ENCODE measurements at regions of chr11 and their contacts with region 1.

Region 1: DNA sequence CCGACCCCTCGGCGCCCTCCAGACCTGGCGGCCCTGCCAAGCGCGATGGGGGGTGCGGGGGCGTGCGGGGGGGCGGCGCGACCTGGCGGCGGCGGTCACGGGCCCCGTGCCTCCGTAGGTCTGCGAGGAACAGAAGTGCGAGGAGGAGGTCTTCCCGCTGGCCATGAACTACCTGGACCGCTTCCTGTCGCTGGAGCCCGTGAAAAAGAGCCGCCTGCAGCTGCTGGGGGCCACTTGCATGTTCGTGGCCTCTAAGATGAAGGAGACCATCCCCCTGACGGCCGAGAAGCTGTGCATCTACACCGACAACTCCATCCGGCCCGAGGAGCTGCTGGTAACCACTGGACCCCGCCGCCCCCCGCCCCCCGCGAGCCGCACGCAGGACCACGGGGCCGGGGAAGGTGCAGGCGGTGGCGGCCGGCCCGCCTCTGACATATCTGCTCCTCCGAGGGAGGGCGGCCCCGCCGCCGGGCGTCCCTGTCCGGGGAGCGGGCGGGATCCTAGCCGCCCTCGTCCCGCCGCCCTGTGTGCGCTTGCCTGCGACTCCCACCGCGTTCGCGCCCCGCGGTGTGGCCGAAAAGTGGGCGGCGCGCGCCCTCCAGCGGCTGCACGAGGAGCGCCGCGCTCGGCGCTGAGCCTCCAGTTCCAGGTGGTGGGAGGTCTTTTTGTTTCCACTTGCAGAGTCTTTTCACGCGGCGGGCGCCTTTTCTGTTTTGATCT is 2.1 kb downstream of the CCND1 start:
- DNase-seq: peak; percentile 57 to 88 (median 83)
- ATAC-seq: peak; percentile 90
- H3K4me3 ChIP-seq: peak overlapping the region; percentile 61
- H3K4me3 Mint-ChIP-seq: peak overlapping the region; percentile 49 to 95 (median 78)
- H3K27ac ChIP-seq: peak overlapping the region; percentile 48
- H3K27ac Mint-ChIP-seq: peak overlapping the region in 1 of 9 donors; percentile 41
- H3K4me1 ChIP-seq: peaks cover 3 to 21% of the 10 kb centered on the region in 2 donors
- H3K4me1 Mint-ChIP-seq: peaks cover 12 to 30% (median 25%) of the 10 kb centered on the region in 7 donors
- H3K27me3 ChIP-seq: peaks cover 9 to 16% of the 10 kb centered on the region in 2 donors
- H3K27me3 Mint-ChIP-seq: peaks cover 23 to 29% (median 26%) of the 10 kb centered on the region in 5 donors

Region 2: GRCh38 chr11:68584097-68584496 is 1059.0 kb before region 1 on chr11:
- CTCF ChIA-PET with region 1: no interaction called
- POLR2A ChIA-PET with region 1: no interaction called
- intact Hi-C with region 1: loop called in 1 of 2 experiments (anchors 5 kb)
- DNase-seq: peak; percentile 13 to 52 (median 45)
- ATAC-seq: peak; percentile 83
- H3K4me3 ChIP-seq: no peak overlapping the region
- H3K4me3 Mint-ChIP-seq: no peak overlapping the region
- H3K27ac ChIP-seq: no peak overlapping the region
- H3K27ac Mint-ChIP-seq: peak overlapping the region in 3 of 9 donors; percentile 18 to 63 (median 55)
- H3K4me1 ChIP-seq: no peaks in the 10 kb centered on the region
- H3K4me1 Mint-ChIP-seq: peaks cover 0 to 26% (median 4%) of the 10 kb centered on the region in 7 donors
- H3K27me3 ChIP-seq: no peaks in the 10 kb centered on the region
- H3K27me3 Mint-ChIP-seq: no peaks in the 10 kb centered on the region

Region 3: GRCh38 chr11:69101115-69101791 is 541.8 kb before region 1 on chr11:
- CTCF ChIA-PET with region 1: interaction called, 37 read pairs
- POLR2A ChIA-PET with region 1: interaction called, 6 read pairs
- intact Hi-C with region 1: loop called in 1 of 2 experiments (anchors 1 kb)
- DNase-seq: peak; percentile 58 to 88 (median 76)
- ATAC-seq: peak; percentile 96
- H3K4me3 ChIP-seq: no peak overlapping the region
- H3K4me3 Mint-ChIP-seq: no peak overlapping the region
- H3K27ac ChIP-seq: no peak overlapping the region
- H3K27ac Mint-ChIP-seq: peak overlapping the region in 1 of 9 donors; percentile 26
- H3K4me1 ChIP-seq: peaks cover 0 to 7% of the 10 kb centered on the region in 2 donors
- H3K4me1 Mint-ChIP-seq: peaks cover 2 to 18% (median 5%) of the 10 kb centered on the region in 7 donors
- H3K27me3 ChIP-seq: no peaks in the 10 kb centered on the region
- H3K27me3 Mint-ChIP-seq: peaks cover 0 to 3% (median 0%) of the 10 kb centered on the region in 5 donors

Region 4: GRCh38 chr11:69122642-69123431 is 520.2 kb before region 1 on chr11:
- CTCF ChIA-PET with region 1: no interaction called
- POLR2A ChIA-PET with region 1: no interaction called
- intact Hi-C with region 1: loop called in 1 of 2 experiments (anchors 5 kb)
- DNase-seq: peak in 8 of 9 donors; percentile 51 to 78 (median 60)
- ATAC-seq: peak; percentile 85
- H3K4me3 ChIP-seq: peak overlapping the region; percentile 53
- H3K4me3 Mint-ChIP-seq: peak overlapping the region; percentile 69 to 86 (median 81)
- H3K27ac ChIP-seq: peak overlapping the region; percentile 76
- H3K27ac Mint-ChIP-seq: peak overlapping the region; percentile 80 to 94 (median 88)
- H3K4me1 ChIP-seq: peaks cover 4 to 42% of the 10 kb centered on the region in 2 donors
- H3K4me1 Mint-ChIP-seq: peaks cover 24 to 57% (median 40%) of the 10 kb centered on the region in 7 donors
- H3K27me3 ChIP-seq: no peaks in the 10 kb centered on the region
- H3K27me3 Mint-ChIP-seq: no peaks in the 10 kb centered on the region

Region 5: DNA sequence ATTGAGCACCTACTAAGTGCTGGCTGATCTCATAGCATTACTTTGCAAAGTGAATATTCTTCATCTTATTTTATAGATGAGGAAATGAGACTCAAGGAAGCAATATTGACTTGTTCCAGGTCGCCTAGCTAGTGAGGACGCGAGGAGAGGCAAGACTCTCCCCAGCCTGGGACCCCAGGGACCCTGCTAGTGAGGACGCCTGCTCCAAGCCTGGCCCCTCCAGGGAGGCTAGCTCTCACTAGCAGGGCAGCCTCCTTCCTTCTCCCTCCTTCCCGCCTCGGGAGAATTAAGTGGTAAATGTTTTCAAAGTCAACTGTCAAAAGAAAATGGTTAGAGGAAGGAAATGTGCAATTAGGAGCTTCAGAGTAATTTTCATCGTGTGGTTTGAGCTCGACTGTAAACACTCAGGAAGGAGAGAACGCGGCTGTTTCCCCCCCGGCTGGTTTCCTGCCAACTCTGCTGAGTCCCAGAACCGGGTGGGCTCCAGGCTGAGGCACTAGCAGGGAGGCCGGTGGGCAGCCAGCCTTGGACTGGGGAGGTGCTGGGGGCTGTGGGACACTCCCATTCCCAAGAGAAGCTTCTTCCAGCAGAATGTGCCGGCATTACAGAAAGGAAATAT is 331.2 kb before region 1 on chr11:
- CTCF ChIA-PET with region 1: no interaction called
- POLR2A ChIA-PET with region 1: no interaction called
- intact Hi-C with region 1: loop called in 1 of 2 experiments (anchors 5 kb)
- DNase-seq: peak in 7 of 9 donors; percentile 30 to 53 (median 49)
- ATAC-seq: peak; percentile 62
- H3K4me3 ChIP-seq: peak overlapping the region; percentile 43
- H3K4me3 Mint-ChIP-seq: peak overlapping the region; percentile 56 to 81 (median 75)
- H3K27ac ChIP-seq: peak overlapping the region; percentile 55
- H3K27ac Mint-ChIP-seq: peak overlapping the region; percentile 55 to 91 (median 79)
- H3K4me1 ChIP-seq: peaks cover 23 to 27% of the 10 kb centered on the region in 2 donors
- H3K4me1 Mint-ChIP-seq: peaks cover 18 to 48% (median 43%) of the 10 kb centered on the region in 7 donors
- H3K27me3 ChIP-seq: no peaks in the 10 kb centered on the region
- H3K27me3 Mint-ChIP-seq: no peaks in the 10 kb centered on the region

Region 6: DNA sequence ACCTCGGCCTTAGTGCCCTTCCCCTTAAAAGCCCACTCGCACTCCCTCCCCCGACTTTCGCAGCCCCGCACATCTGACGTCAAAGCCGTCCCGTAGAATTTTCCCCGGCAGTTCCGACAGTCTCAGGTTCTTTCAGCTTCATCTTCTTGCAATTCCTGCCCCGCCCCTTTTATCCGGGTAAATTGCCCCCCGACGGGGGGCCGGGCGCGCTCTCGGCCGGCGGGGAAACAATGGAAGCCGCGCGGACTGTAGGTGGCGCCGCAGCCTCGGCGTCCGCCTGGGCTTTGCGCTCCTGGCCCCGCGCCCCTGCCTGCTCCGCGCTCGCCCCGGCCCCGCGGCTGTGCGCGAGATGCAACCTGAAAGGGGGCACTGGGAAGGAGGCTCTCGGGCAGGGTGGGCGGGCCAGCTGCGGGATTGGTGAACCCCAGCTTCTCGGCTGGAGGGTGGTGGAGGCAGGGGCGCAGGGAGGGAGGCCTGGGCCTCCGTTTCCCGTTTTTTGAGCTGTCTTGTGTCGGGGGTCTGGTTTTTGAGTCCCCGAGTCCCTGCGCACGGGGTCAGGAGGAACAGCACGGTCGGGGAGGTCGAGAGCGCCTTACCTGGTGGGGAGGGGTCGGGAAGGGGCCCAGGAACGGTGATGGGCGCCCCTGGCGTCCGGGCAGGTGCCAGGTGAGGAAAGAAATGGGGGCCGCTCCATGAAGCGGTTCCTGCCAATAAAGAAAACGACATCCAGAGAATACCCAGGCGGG is 61.6 kb after region 1 on chr11:
- CTCF ChIA-PET with region 1: no interaction called
- POLR2A ChIA-PET with region 1: no interaction called
- intact Hi-C with region 1: loop called in 1 of 2 experiments (anchors 5 kb)
- DNase-seq: no peak
- ATAC-seq: no peak
- H3K4me3 ChIP-seq: no peak overlapping the region
- H3K4me3 Mint-ChIP-seq: peak overlapping the region in 5 of 10 donors; percentile 38 to 76 (median 60)
- H3K27ac ChIP-seq: no peak overlapping the region
- H3K27ac Mint-ChIP-seq: no peak overlapping the region
- H3K4me1 ChIP-seq: no peaks in the 10 kb centered on the region
- H3K4me1 Mint-ChIP-seq: peaks cover 0 to 19% (median 13%) of the 10 kb centered on the region in 7 donors
- H3K27me3 ChIP-seq: peaks cover 0 to 10% of the 10 kb centered on the region in 2 donors
- H3K27me3 Mint-ChIP-seq: peaks cover 33 to 63% (median 47%) of the 10 kb centered on the region in 5 donors

Region 7: GRCh38 chr11:69918938-69919650 is 276.0 kb after region 1 on chr11:
- CTCF ChIA-PET with region 1: no interaction called
- POLR2A ChIA-PET with region 1: no interaction called
- intact Hi-C with region 1: no loop called
- DNase-seq: peak; percentile 25 to 83 (median 56)
- ATAC-seq: peak; percentile 65
- H3K4me3 ChIP-seq: no peak overlapping the region
- H3K4me3 Mint-ChIP-seq: no peak overlapping the region
- H3K27ac ChIP-seq: no peak overlapping the region
- H3K27ac Mint-ChIP-seq: no peak overlapping the region
- H3K4me1 ChIP-seq: no peaks in the 10 kb centered on the region
- H3K4me1 Mint-ChIP-seq: peaks cover 0 to 5% (median 0%) of the 10 kb centered on the region in 7 donors
- H3K27me3 ChIP-seq: no peaks in the 10 kb centered on the region
- H3K27me3 Mint-ChIP-seq: peaks cover 13 to 66% (median 36%) of the 10 kb centered on the region in 5 donors